Stomach (tissue), 19 donors: ENCODE measurements at regions of chr2 and their contacts with region 1.

Region 1: DNA sequence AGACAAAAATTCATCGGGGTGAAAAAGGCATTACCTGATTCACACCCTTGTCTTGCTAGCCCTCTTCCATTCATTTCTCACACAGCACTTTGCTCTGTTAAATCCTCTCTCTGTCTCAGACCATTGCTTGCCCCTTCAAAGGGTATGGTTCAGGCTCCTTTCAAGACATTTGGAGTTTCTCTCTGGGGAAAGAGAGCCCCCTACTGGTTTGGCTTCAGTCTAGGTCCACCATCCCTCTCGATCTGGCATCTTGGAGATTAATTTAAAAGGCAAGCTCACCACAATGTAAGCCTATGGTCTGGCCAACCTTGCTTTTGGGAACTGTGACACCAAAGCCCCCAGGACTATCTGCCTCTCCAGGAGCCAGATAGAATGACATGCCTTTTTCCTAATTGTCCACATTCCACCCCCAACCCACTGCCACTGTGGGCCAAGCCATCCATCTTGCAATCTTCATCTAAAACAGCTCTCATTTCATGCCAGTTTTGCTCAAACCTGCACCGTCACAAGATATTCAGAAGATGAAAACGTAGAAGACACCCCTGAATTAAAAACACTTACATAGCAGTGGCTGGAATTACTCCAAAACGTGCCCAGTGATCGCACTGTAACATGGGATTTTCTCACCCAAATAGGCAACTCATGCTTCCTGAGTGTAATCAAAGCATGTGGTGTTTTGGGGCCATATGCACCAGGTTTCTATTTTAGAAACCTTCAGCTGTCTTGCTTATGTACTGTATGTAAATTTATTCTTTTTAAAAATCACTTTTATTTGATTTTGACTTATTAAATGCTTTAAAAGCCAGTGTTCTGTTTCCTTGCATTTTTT is 93.9 kb downstream of the FARSB start:
- DNase-seq: peak; percentile 40 to 82
- H3K4me3 ChIP-seq: no peak overlapping the region
- H3K27ac ChIP-seq: no peak overlapping the region
- H3K4me1 ChIP-seq: no peaks in the 10 kb centered on the region
- H3K27me3 ChIP-seq: peaks cover 0 to 3% (median 0%) of the 10 kb centered on the region in 3 donors
- CTCF ChIP-seq: peak in 5 of 7 experiments; percentile 30 to 61 (median 49)
- EP300 ChIP-seq: no peak
- POLR2A ChIP-seq: no peak

Region 2: DNA sequence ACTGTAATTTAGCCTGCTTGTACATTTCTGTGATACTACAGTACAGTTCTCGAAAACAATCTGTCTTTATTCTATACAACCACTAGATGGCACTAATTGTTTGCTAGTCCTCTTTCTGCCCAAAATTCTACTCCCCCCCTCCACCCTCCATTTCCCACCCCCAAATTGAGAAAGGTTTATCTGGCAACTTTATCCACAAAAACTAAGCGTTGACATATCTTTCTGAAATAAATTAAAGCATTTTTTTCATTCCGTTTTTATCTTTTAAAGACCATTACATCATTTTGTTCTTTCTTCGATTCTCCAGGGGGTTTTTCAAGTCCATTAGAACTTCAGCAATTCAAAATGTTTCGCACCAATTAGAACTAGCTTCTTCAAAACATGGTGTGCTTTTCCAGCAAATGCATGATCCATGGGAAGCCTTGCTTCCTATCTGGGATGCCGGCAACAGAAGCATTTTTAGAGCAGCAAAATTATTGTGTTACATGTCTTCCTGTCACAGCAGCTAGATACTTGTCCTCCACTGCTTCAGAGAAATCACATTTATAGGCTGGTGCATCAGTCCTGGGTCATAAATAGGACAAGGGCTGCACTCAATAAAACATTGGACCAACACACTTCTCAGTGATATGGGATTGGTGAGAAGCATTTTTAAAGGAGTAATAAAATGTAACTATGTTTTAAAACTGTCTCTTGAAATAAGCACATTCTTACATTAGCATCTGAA is 504.5 kb before region 1 on chr2:
- intact Hi-C with region 1: loop called (anchors 10 kb)
- DNase-seq: peak in 1 of 2 donors; percentile 24
- H3K4me3 ChIP-seq: no peak overlapping the region
- H3K27ac ChIP-seq: no peak overlapping the region
- H3K4me1 ChIP-seq: no peaks in the 10 kb centered on the region
- H3K27me3 ChIP-seq: peaks cover 0 to 76% (median 13%) of the 10 kb centered on the region in 3 donors
- CTCF ChIP-seq: peak in 4 of 7 experiments; percentile 11 to 50 (median 40)
- EP300 ChIP-seq: no peak
- POLR2A ChIP-seq: no peak